Pancreas (tissue), 10 donors: ENCODE measurements at regions of chr14 and their contacts with region 1.

Region 1: DNA sequence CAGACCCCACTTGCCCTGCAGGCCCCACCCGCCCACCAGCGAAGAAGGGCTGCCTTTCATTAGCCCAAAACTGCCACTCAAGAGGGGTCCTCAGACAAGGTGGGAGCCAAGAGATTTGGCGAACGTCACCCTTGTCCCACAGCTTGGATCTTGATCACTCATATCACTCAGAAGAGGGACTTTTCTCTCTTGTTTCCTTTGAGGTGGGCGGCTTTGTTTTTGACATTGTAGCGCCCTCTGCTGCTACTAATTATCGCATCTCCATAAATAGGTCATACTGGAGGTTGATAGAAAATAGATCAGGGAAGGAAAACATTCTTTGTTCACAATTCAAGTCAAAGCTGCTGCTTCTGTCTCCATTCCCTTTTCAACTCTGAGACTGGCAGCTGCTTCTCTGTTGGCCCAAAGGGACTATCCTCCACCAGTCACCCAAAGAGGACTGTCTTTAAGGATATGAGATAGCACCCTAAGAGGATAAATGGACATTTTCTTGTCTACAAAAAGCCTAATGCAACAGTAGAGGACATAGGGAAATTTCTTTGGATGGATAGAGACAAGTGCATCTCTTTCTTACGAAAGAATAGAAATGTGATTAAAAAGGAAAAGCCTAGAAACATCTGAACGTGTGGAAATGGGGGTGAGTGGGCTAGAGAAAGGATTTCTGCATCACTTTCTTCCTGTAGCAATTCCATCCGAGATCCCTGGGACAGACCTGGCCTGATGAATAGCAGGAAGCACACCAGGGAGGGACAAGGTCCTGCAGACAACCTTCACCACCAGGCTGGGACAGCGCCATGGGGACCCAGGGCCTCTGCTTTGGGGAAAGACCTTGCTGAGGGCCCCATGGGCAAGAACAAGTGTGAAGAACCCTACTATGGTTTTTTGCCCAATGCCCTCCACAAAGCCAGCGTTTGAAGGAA is 115.8 kb downstream of the DAD1 start:
- DNase-seq: peak in 1 of 6 donors; percentile 58
- ATAC-seq: peak; percentile 68 to 87 (median 76)
- H3K4me3 ChIP-seq: no peak overlapping the region
- H3K27ac ChIP-seq: no peak overlapping the region
- H3K4me1 ChIP-seq: no peaks in the 10 kb centered on the region
- H3K27me3 ChIP-seq: no peaks in the 10 kb centered on the region
- CTCF ChIP-seq: peak; percentile 13 to 45 (median 36)

Region 2: GRCh38 chr14:22319526-22320361 is 153.5 kb before region 1 on chr14:
- intact Hi-C with region 1: loop called in 1 of 3 experiments (anchors 10 kb)
- DNase-seq: peak in 4 of 6 donors; percentile 17 to 64 (median 30)
- ATAC-seq: peak in 3 of 4 donors; percentile 83 to 87 (median 86)
- H3K4me3 ChIP-seq: no peak overlapping the region
- H3K27ac ChIP-seq: no peak overlapping the region
- H3K4me1 ChIP-seq: no peaks in the 10 kb centered on the region
- H3K27me3 ChIP-seq: no peaks in the 10 kb centered on the region
- CTCF ChIP-seq: peak; percentile 16 to 53 (median 42)

Region 3: GRCh38 chr14:22391912-22392421 is 81.2 kb before region 1 on chr14:
- intact Hi-C with region 1: loop called in 2 of 3 experiments (anchors 2 to 5 kb)
- DNase-seq: peak in 4 of 6 donors; percentile 42 to 77 (median 50)
- ATAC-seq: peak; percentile 76 to 93 (median 92)
- H3K4me3 ChIP-seq: no peak overlapping the region
- H3K27ac ChIP-seq: no peak overlapping the region
- H3K4me1 ChIP-seq: no peaks in the 10 kb centered on the region
- H3K27me3 ChIP-seq: no peaks in the 10 kb centered on the region
- CTCF ChIP-seq: peak; percentile 5 to 50 (median 46)

Region 4: GRCh38 chr14:22397221-22397737 is 75.9 kb before region 1 on chr14:
- intact Hi-C with region 1: loop called in 2 of 3 experiments (anchors 2 to 5 kb)
- DNase-seq: no peak
- ATAC-seq: no peak
- H3K4me3 ChIP-seq: no peak overlapping the region
- H3K27ac ChIP-seq: no peak overlapping the region
- H3K4me1 ChIP-seq: no peaks in the 10 kb centered on the region
- H3K27me3 ChIP-seq: no peaks in the 10 kb centered on the region
- CTCF ChIP-seq: no peak